ENCODE measurements at regions of chr5 and their contacts with region 1.

Region 1: GRCh38 chr5:81301271-81302015 is at the start of gene ZCCHC9:
- DNase-seq: peak; percentile 86
- ATAC-seq: peak; percentile 91
- H3K4me3 Mint-ChIP-seq: peak within 1 kb of the TSS; percentile 94
- H3K27ac Mint-ChIP-seq: peak within 1 kb of the TSS; percentile 93
- H3K4me1 Mint-ChIP-seq: peaks cover 32% of the 10 kb centered on the region
- H3K27me3 Mint-ChIP-seq: no peaks in the 10 kb centered on the region
- CTCF ChIP-seq: no peak
- total RNA-seq, gene ZCCHC9: 23.7 and 24.0 TPM in 2 replicates

Region 2: DNA sequence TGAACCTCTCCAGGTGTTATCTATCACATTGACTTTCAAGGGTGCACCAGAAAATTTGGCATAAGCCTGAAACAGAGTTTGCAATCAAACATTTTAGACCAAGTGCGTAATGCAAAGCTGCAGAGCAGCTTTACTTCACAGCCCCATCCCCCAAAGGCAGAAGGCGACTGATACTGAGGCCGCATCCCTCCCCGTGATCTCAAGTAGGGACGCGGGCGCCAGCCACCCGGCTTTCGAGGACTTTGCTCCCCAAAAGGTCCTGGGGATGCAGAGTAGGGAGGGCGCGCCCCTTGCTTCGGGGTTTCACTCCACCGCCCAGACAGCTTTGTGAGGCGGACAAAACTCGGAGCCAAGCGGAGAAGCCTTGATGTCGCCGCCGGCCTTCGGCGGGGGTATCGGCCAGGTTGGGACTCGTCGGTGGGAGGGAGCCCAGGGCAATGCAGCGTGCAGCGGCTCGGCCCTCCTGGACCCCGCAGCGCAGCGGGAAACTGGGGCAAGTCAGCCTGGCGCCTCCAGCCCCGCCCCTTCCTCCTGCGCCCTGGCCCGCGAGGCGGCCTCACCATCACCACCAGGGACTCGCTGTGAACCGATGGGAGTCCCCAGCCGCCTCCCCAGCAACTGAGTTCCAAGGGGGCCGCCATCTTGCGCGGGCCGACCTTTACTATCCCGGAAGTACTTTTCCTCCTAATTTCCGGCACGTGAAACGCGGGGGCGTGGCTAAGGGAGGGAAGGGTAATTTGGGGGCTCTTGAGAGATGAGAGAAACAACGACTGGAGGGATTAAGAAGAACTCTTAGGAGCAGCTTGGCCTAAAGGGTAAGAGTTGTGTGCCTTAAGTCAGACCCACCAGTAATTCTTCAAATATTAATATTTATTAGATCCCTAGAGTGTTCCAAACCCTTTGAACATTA is 1310.6 kb before region 1 on chr5 and contains the start of gene MTX3:
- CTCF ChIA-PET with region 1: no interaction called
- POLR2A ChIA-PET with region 1: no interaction called
- intact Hi-C with region 1: loop called (anchors 10 kb)
- DNase-seq: peak; percentile 74
- ATAC-seq: peak; percentile 95
- H3K4me3 Mint-ChIP-seq: peak within 1 kb of the TSS; percentile 88
- H3K27ac Mint-ChIP-seq: peak within 1 kb of the TSS; percentile 84
- H3K4me1 Mint-ChIP-seq: peaks cover 23% of the 10 kb centered on the region
- H3K27me3 Mint-ChIP-seq: peaks cover 2% of the 10 kb centered on the region
- CTCF ChIP-seq: no peak
- total RNA-seq, gene MTX3: 20.0 and 21.4 TPM in 2 replicates

Region 3: GRCh38 chr5:80407735-80408482 is 893.5 kb before region 1 on chr5 and contains the start of gene ZFYVE16:
- CTCF ChIA-PET with region 1: no interaction called
- POLR2A ChIA-PET with region 1: no interaction called
- intact Hi-C with region 1: loop called (anchors 5 kb)
- DNase-seq: peak; percentile 95
- ATAC-seq: peak; percentile 84
- H3K4me3 Mint-ChIP-seq: peak within 1 kb of the TSS; percentile 91
- H3K27ac Mint-ChIP-seq: peak within 1 kb of the TSS; percentile 95
- H3K4me1 Mint-ChIP-seq: peaks cover 17% of the 10 kb centered on the region
- H3K27me3 Mint-ChIP-seq: no peaks in the 10 kb centered on the region
- CTCF ChIP-seq: no peak
- total RNA-seq, gene ZFYVE16: 19.8 and 21.1 TPM in 2 replicates

Region 4: GRCh38 chr5:81212211-81212751 is 89.2 kb before region 1 on chr5:
- CTCF ChIA-PET with region 1: no interaction called
- POLR2A ChIA-PET with region 1: interaction called, 3 read pairs
- intact Hi-C with region 1: loop called (anchors 5 kb)
- DNase-seq: peak; percentile 31
- ATAC-seq: peak; percentile 88
- H3K4me3 Mint-ChIP-seq: peak overlapping the region; percentile 24
- H3K27ac Mint-ChIP-seq: peak overlapping the region; percentile 70
- H3K4me1 Mint-ChIP-seq: peaks cover 13% of the 10 kb centered on the region
- H3K27me3 Mint-ChIP-seq: peaks cover 3% of the 10 kb centered on the region
- CTCF ChIP-seq: no peak

Region 5: GRCh38 chr5:81971712-81972495 is 670.5 kb after region 1 on chr5 and contains the start of gene ATG10:
- CTCF ChIA-PET with region 1: no interaction called
- POLR2A ChIA-PET with region 1: no interaction called
- intact Hi-C with region 1: loop called (anchors 2 kb)
- DNase-seq: peak; percentile 93
- ATAC-seq: peak; percentile 95
- H3K4me3 Mint-ChIP-seq: peak within 1 kb of the TSS; percentile 88
- H3K27ac Mint-ChIP-seq: peak within 1 kb of the TSS; percentile 86
- H3K4me1 Mint-ChIP-seq: peaks cover 20% of the 10 kb centered on the region
- H3K27me3 Mint-ChIP-seq: no peaks in the 10 kb centered on the region
- CTCF ChIP-seq: no peak
- total RNA-seq, gene ATG10: 5.3 and 7.3 TPM in 2 replicates

Region 6: DNA sequence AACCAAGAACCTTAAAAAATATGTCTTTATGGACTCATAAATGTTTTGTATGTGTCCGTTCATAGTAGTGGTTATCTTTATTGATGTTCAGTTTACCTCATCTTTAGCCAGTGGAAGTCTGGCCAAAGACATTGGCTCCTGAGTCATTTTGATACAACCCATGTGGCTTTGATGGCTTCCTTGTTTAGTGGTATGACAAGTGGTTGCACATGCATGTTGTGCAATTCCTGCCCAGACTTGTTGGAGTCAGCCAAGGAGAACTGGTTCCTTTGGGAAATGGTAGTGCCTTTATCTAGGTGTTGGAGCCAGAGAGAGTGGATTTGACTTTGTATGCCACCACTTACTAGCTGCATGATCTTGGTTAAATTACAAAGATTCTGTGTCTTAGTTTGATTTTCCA is 882.4 kb after region 1 on chr5:
- CTCF ChIA-PET with region 1: no interaction called
- POLR2A ChIA-PET with region 1: interaction called, 11 read pairs
- intact Hi-C with region 1: no loop called
- DNase-seq: no peak
- ATAC-seq: no peak
- H3K4me3 Mint-ChIP-seq: no peak overlapping the region
- H3K27ac Mint-ChIP-seq: no peak overlapping the region
- H3K4me1 Mint-ChIP-seq: no peaks in the 10 kb centered on the region
- H3K27me3 Mint-ChIP-seq: no peaks in the 10 kb centered on the region
- CTCF ChIP-seq: no peak

Region 7: DNA sequence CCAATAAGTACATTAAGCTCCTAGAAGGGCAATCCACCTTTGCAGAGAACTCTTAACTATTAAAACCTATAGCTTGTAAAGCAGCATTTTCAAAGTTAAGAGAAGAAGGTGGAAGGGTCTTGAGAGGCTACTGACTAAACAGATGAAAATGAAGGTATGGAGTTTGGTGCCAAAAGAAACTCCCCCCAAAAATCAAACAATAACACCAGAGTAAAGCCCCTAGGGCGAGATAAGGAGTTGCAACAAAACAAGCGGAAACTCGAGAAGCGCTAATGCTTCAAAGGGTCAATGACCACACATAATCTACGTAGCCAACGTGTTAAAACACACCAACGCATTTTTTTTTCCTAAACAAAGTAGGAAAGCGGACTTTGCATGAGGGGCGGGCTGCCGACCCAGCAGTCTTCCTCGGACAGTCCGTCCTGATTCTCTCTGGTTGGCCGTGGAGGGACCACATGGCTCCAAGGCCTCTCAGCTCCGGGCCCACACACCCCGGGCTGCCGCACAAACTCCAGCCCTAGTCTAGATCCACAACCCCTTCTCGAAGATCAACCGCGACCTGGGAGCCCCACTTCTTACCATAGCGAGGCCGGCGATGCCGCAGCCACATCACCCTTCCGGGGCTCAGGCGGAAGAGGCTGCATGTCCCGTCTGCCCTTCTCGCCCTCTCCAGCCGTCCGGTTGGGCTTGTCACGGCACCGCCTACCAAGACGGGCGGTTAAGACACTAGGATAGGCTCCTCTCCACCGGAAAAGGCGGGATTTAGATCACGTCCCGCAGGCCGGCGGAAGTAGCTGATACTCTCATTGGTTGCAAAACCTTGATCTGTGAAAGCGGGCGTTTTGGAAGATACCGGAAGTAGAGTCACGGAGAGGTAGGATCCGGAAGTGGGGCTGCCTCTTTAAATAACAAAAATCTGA is 1775.6 kb after region 1 on chr5 and contains the starts of genes TMEM167A and XRCC4:
- CTCF ChIA-PET with region 1: no interaction called
- POLR2A ChIA-PET with region 1: no interaction called
- intact Hi-C with region 1: loop called (anchors 1 kb)
- DNase-seq: peak; percentile 80
- ATAC-seq: peak; percentile 99
- H3K4me3 Mint-ChIP-seq: peak within 1 kb of the TSS; percentile 100
- H3K27ac Mint-ChIP-seq: peak within 1 kb of the TSS; percentile 99
- H3K4me1 Mint-ChIP-seq: peaks cover 40% of the 10 kb centered on the region
- H3K27me3 Mint-ChIP-seq: no peaks in the 10 kb centered on the region
- CTCF ChIP-seq: no peak
- total RNA-seq, gene TMEM167A: 45.1 and 50.3 TPM in 2 replicates
- total RNA-seq, gene XRCC4: 8.1 and 8.5 TPM in 2 replicates